WTC11 (cell line): ENCODE measurements at regions of chr14 and their contacts with region 1.

Region 1: GRCh38 chr14:94485944-94486841 is 10.2 kb upstream of the SERPINA9 start:
- DNase-seq: peak; percentile 83
- ATAC-seq: peak; percentile 96
- H3K4me3 Mint-ChIP-seq: peak overlapping the region; percentile 58
- H3K27ac Mint-ChIP-seq: peak overlapping the region; percentile 20
- H3K4me1 Mint-ChIP-seq: peaks cover 19% of the 10 kb centered on the region
- H3K27me3 Mint-ChIP-seq: no peaks in the 10 kb centered on the region
- CTCF ChIP-seq: peak; percentile 99

Region 2: DNA sequence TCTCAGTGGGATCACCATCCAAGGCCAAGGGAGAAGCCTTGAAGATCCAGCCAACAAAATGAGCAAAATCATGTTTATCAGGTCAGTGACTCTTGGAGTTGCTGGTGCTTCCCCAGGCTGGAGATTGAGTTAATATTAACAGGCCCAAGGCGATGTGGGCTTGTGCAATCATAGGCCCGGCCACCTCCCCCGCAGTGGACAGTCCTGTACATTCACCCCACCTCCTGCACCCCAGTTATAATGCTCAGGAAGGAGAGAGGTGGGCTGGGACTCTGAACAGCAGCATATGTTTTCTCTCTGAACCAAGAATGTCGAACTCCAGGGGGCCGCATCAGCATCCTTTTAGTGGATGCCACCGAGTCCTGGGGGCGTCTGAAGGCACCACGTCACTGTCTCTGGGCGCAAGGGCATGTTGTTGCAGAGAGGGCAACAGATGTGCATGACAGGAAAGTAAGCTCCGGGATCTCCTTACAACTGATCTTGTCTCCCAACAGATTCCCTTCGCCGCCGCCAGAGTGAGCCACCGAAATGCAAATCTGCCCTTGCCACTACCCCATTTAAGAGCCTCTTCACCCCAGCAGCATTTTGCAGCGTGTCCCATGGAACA is 130.9 kb before region 1 on chr14:
- CTCF ChIA-PET with region 1: interaction called, 23 read pairs
- POLR2A ChIA-PET with region 1: no interaction called
- DNase-seq: peak; percentile 69
- ATAC-seq: peak; percentile 98
- H3K4me3 Mint-ChIP-seq: no peak overlapping the region
- H3K27ac Mint-ChIP-seq: peak overlapping the region; percentile 20; the same call in 1 of the 2 replicates
- H3K4me1 Mint-ChIP-seq: peaks cover 16% of the 10 kb centered on the region
- H3K27me3 Mint-ChIP-seq: no peaks in the 10 kb centered on the region
- CTCF ChIP-seq: no peak

Region 3: DNA sequence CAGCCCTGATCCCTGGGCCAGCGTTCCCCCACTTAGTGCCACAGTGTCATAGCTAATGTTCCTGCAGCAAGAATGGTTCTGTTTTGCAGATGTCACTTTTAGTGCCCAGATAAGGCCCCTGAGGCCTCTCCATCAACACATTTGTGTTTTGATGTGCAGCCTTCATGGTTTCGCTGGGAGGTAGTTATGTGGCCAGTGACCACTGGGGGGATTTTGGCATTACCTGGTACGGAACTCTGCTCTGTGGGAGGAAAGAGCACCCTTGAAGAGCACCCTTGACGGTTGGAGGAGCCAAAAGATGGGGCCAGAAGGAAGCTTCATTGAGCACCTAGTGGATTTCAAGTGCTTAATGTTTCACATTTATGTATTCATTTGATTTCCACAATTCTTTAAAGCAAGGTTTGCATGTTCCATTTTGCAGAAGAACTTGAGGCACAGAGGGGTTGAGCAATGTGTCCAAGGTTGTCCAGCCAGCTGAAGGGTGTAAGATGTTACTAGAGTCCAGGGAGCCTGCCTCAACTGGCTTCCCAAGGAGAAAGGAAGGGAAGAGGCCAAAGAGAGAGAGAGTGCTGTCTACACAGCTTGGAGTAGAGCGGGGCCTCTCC is 46.6 kb before region 1 on chr14:
- CTCF ChIA-PET with region 1: interaction called, 264 read pairs
- POLR2A ChIA-PET with region 1: interaction called, 7 read pairs
- DNase-seq: no peak
- ATAC-seq: peak; percentile 51; the same call in 1 of the 2 replicates
- H3K4me3 Mint-ChIP-seq: no peak overlapping the region
- H3K27ac Mint-ChIP-seq: no peak overlapping the region
- H3K4me1 Mint-ChIP-seq: peaks cover 5% of the 10 kb centered on the region; the same call in 1 of the 2 replicates
- H3K27me3 Mint-ChIP-seq: no peaks in the 10 kb centered on the region
- CTCF ChIP-seq: no peak

Region 4: DNA sequence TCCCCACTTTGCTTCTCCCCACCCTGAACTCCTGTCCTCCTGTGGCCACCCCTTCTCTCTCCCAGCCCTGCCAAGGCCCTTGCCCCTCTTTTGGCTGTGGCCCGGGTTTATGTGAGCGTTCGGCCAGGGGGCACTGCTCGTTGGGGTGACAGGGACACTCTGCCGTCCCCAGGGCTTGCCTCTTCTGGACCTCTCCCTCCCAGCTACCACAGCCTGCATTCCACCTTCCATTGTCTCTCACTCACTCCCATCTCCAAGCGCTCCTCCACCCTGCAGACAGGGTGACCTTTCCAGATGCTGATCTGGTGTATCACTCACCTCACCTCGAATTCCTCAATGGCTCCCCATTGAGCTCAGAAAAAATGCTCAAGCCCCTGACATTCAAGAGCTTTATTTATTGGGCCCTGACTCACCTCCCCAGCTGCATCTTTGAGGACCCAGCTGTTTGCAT is 11.6 kb before region 1 on chr14:
- CTCF ChIA-PET with region 1: interaction called, 61 read pairs
- POLR2A ChIA-PET with region 1: no interaction called
- DNase-seq: no peak
- ATAC-seq: peak; percentile 82
- H3K4me3 Mint-ChIP-seq: no peak overlapping the region
- H3K27ac Mint-ChIP-seq: no peak overlapping the region
- H3K4me1 Mint-ChIP-seq: no peaks in the 10 kb centered on the region
- H3K27me3 Mint-ChIP-seq: peaks cover 7% of the 10 kb centered on the region; the same call in 1 of the 2 replicates
- CTCF ChIP-seq: no peak

Region 5: GRCh38 chr14:94517641-94518257 is 31.6 kb after region 1 on chr14:
- CTCF ChIA-PET with region 1: interaction called, 10 read pairs
- POLR2A ChIA-PET with region 1: no interaction called
- DNase-seq: no peak
- ATAC-seq: peak; percentile 32; the same call in 1 of the 2 replicates
- H3K4me3 Mint-ChIP-seq: no peak overlapping the region
- H3K27ac Mint-ChIP-seq: no peak overlapping the region; the same call in 1 of the 2 replicates
- H3K4me1 Mint-ChIP-seq: peaks cover 19% of the 10 kb centered on the region
- H3K27me3 Mint-ChIP-seq: peaks cover 3% of the 10 kb centered on the region; the same call in 1 of the 2 replicates
- CTCF ChIP-seq: no peak

Region 6: GRCh38 chr14:94548999-94549985 is 63.1 kb after region 1 on chr14:
- CTCF ChIA-PET with region 1: interaction called, 90 read pairs
- POLR2A ChIA-PET with region 1: interaction called, 4 read pairs
- DNase-seq: peak; percentile 92
- ATAC-seq: peak; percentile 89
- H3K4me3 Mint-ChIP-seq: no peak overlapping the region
- H3K27ac Mint-ChIP-seq: no peak overlapping the region
- H3K4me1 Mint-ChIP-seq: peaks cover 25% of the 10 kb centered on the region
- H3K27me3 Mint-ChIP-seq: no peaks in the 10 kb centered on the region; the same call in 1 of the 2 replicates
- CTCF ChIP-seq: peak; percentile 98

Region 7: DNA sequence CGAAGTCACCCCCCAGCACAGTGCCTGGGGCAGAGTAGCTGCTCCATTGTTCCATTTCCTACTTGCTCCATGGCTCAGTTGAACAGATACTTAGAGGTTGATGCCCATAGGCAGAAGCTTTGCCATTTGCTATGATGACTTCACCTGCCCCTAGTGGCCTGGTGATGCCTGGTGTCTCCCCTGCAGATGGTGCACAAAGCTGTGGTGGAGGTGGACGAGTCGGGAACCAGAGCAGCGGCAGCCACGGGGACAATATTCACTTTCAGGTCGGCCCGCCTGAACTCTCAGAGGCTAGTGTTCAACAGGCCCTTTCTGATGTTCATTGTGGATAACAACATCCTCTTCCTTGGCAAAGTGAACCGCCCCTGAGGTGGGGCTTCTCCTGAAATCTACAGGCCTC is 105.7 kb after region 1 on chr14:
- CTCF ChIA-PET with region 1: no interaction called
- POLR2A ChIA-PET with region 1: no interaction called
- DNase-seq: no peak
- ATAC-seq: no peak
- H3K4me3 Mint-ChIP-seq: no peak overlapping the region
- H3K27ac Mint-ChIP-seq: no peak overlapping the region
- H3K4me1 Mint-ChIP-seq: no peaks in the 10 kb centered on the region
- H3K27me3 Mint-ChIP-seq: no peaks in the 10 kb centered on the region
- CTCF ChIP-seq: no peak

Region 8: DNA sequence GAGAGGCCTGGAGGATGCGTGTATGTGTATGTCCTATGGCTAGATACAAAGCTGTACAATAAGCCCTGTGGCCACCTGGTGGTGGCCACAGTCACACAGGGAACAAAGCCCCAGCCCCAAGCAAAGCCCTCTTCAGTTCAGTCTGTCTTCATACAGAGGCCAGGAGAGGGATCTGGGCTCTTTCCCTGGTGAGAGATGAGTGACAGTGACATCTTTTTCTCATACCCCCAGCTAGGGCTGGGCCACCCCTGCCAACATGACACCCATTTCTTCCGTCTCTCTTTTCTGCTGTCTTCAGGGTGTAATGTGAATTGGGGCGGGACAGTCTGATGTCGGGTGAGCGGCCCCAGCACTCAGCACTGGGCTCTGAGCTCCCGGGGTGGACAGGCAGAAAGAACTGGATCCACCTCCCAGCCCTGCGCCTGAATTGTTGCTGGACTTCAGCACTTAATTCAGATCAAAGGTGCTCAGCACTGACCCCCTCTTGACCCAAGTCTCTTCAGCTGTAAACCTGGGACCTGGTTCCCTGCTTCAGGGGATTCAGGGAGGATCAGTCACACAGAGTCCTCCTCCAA is 185.8 kb after region 1 on chr14:
- CTCF ChIA-PET with region 1: interaction called, 10 read pairs
- POLR2A ChIA-PET with region 1: no interaction called
- DNase-seq: no peak
- ATAC-seq: peak; percentile 81
- H3K4me3 Mint-ChIP-seq: no peak overlapping the region
- H3K27ac Mint-ChIP-seq: no peak overlapping the region; the same call in 1 of the 2 replicates
- H3K4me1 Mint-ChIP-seq: no peaks in the 10 kb centered on the region
- H3K27me3 Mint-ChIP-seq: no peaks in the 10 kb centered on the region
- CTCF ChIP-seq: no peak